Sigmoid colon (tissue), 7 donors: ENCODE measurements at regions of chr13 and their contacts with region 1.

Region 1: DNA sequence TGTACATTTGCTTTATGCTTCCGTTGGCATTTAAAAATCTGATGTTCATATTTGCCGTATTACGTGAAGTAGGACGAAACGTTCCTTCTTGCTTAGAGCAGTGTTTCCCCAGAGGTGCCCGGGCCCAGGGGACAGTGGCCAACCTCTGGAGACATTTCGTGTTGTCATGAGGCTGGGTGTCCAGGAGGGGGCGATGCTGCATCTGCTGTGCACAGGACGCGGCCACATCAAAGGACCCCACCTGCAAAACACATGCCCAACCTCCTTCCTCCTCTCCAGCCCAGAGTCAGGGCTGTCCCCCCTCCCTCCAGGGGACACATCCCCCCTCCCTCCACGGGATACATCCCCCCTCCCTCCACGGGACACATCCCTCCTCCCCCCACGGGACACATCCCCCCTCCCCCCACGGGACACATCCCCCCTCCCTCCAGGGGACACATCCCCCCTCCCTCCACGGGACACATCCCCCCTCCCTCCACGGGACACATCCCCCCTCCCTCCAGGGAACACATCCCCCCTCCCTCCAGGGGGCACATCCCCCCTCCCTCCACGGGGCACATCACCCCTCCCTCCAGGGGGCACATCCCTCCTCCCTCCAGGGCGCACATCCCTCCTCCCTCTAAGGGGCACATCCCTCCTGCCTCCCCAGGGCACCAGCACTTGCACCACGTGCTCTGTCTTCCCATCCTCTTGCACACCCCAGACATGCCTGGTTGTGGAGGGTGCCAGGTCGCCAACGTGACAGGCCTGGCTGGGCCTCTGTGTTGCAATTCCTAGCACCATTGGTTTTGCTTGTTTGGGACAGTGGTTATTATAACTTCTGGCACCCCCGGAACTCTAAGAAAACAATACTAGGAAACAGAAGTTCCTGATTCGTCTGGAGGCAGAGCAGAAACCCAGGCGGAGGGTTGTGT is 46.7 kb downstream of the GAS6 start:
- DNase-seq: peak; percentile 95
- H3K4me3 ChIP-seq: no peak overlapping the region
- H3K27ac ChIP-seq: peak overlapping the region; percentile 53 to 89 (median 68)
- H3K4me1 ChIP-seq: peaks cover 0 to 60% (median 49%) of the 10 kb centered on the region in 4 donors
- H3K27me3 ChIP-seq: no peaks in the 10 kb centered on the region
- CTCF ChIP-seq: peak; percentile 77 to 90 (median 86)
- EP300 ChIP-seq: no peak
- POLR2A ChIP-seq: no peak

Region 2: GRCh38 chr13:113837554-113838355 is 20.6 kb after region 1 on chr13:
- intact Hi-C with region 1: loop called (anchors 2 kb)
- DNase-seq: peak; percentile 98
- H3K4me3 ChIP-seq: peak overlapping the region in 3 of 4 donors; percentile 22 to 45 (median 24)
- H3K27ac ChIP-seq: peak overlapping the region; percentile 85 to 94 (median 90)
- H3K4me1 ChIP-seq: peaks cover 0 to 49% (median 44%) of the 10 kb centered on the region in 4 donors
- H3K27me3 ChIP-seq: no peaks in the 10 kb centered on the region
- CTCF ChIP-seq: no peak
- EP300 ChIP-seq: peak in 1 of 4 donors; percentile 27
- POLR2A ChIP-seq: no peak

Region 3: GRCh38 chr13:113863436-113864272 is 46.5 kb after region 1 on chr13 and contains the start of gene GAS6:
- intact Hi-C with region 1: loop called (anchors 1 kb)
- DNase-seq: no peak
- H3K4me3 ChIP-seq: peak within 1 kb of the TSS; percentile 42 to 81 (median 74)
- H3K27ac ChIP-seq: peak within 1 kb of the TSS; percentile 75 to 93 (median 82)
- H3K4me1 ChIP-seq: peaks cover 0 to 39% (median 21%) of the 10 kb centered on the region in 4 donors
- H3K27me3 ChIP-seq: no peaks in the 10 kb centered on the region
- CTCF ChIP-seq: no peak
- EP300 ChIP-seq: no peak
- POLR2A ChIP-seq: no peak
- total RNA-seq, gene GAS6: 34.4 to 105 (median 70.4) TPM

Region 4: DNA sequence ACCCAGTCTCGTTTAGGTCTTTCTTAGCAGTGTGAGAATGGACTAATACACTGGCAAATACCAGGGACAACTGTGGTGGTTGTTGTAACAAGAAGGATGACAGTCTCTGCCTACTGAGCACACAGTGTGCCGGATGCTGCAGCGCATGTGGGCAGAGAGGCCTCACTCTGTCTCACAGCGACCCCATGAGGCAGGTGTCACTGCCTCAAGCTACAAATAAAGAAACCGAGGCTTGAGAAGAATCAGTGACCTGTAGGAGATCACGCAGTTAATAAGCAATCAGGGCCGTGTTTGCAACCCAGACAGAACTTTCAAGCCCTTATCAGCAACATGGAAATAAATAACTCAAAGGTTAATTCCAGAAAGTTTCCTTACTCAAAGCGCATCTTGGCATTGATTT is 87.2 kb after region 1 on chr13:
- intact Hi-C with region 1: loop called (anchors 2 kb)
- DNase-seq: no peak
- H3K4me3 ChIP-seq: no peak overlapping the region
- H3K27ac ChIP-seq: peak overlapping the region in 2 of 4 donors; percentile 68 to 86
- H3K4me1 ChIP-seq: peaks cover 0 to 28% (median 14%) of the 10 kb centered on the region in 4 donors
- H3K27me3 ChIP-seq: no peaks in the 10 kb centered on the region
- CTCF ChIP-seq: peak in 3 of 4 experiments; percentile 27 to 46 (median 44)
- EP300 ChIP-seq: no peak
- POLR2A ChIP-seq: no peak

Region 5: DNA sequence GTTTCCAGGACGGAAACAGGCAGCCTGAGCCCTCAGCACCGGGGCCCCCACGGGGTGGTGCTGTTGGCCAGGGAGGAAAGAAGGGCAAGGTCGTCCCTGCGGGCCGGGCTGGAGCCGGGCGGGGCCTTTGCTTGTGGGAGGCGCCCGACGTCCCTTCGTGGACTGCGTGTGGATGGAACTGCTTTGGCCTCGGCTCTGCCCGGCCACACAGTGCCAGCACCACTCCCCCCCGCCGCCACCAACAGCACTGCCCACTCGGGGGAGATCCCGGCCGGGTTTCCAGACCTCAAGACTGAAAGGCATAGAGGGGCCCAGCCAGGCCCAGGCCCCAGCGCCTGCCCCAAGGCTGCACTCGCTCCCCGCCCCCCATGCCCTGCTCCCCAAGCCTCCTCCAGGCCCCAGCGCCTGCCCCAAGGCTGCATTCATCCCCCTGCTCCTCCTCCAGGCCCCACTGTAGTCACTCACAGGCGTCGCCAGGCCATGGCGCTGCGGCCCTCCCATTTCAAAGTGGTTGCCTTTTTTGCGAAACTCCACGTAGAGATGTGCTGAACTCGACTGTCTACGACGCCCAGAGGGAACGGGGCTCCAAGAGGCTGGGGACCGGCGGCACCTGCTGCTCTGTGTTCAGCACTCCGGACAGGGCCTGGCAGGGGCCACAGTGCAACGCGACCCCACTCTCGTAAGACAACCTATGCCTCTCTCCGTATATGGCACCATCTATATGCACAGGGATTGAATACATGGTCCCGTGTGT is 134.2 kb after region 1 on chr13:
- intact Hi-C with region 1: loop called (anchors 1 kb)
- DNase-seq: peak; percentile 93
- H3K4me3 ChIP-seq: peak overlapping the region in 3 of 4 donors; percentile 25 to 36 (median 33)
- H3K27ac ChIP-seq: peak overlapping the region in 2 of 4 donors; percentile 25 to 42
- H3K4me1 ChIP-seq: peaks cover 0 to 22% (median 15%) of the 10 kb centered on the region in 4 donors
- H3K27me3 ChIP-seq: no peaks in the 10 kb centered on the region
- CTCF ChIP-seq: peak; percentile 71 to 88 (median 82)
- EP300 ChIP-seq: no peak
- POLR2A ChIP-seq: no peak

Region 6: GRCh38 chr13:114065141-114065925 is 248.1 kb after region 1 on chr13:
- intact Hi-C with region 1: loop called (anchors 5 kb)
- DNase-seq: peak; percentile 96
- H3K4me3 ChIP-seq: peak overlapping the region in 3 of 4 donors; percentile 37 to 45 (median 43)
- H3K27ac ChIP-seq: peak overlapping the region; percentile 90 to 98 (median 96)
- H3K4me1 ChIP-seq: peaks cover 0 to 71% (median 68%) of the 10 kb centered on the region in 4 donors
- H3K27me3 ChIP-seq: no peaks in the 10 kb centered on the region
- CTCF ChIP-seq: no peak
- EP300 ChIP-seq: peak in 2 of 4 donors; percentile 69 to 88
- POLR2A ChIP-seq: no peak

Region 7: GRCh38 chr13:114212158-114212495 is 394.9 kb after region 1 on chr13:
- intact Hi-C with region 1: no loop called
- DNase-seq: no peak
- H3K4me3 ChIP-seq: no peak overlapping the region
- H3K27ac ChIP-seq: no peak overlapping the region
- H3K4me1 ChIP-seq: no peaks in the 10 kb centered on the region
- H3K27me3 ChIP-seq: peaks cover 0 to 9% (median 0%) of the 10 kb centered on the region in 3 donors
- CTCF ChIP-seq: no peak
- EP300 ChIP-seq: no peak
- POLR2A ChIP-seq: no peak

Region 8: DNA sequence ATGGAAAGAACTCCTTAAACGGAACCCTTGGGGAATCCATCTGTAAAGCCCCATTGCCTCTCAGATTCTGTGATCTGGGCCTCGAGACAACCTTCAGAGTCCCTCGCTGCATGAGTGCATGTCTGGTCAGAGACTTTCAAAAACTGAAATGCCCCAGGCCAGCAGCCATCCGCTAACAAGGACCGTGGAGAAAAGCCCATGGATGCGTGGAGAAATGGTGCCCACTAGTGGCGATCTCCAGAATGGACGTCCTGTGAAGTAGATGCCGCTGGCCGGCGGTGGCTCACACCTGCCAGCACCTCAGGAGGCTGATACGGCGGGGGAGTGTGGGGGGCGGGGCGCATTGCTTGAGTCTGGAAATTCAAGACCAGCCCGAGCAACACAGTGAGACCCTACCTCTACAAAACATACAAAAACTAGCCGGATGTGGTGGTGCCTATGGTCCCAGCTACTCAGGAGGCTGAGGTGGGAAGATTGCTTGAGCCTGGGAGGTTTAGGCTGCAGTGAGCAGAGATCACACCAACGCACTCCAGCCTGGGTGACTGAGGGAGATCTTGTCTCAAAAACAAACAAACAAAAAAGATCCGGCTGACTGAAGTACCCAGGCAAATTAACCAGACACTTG is 409.6 kb after region 1 on chr13:
- intact Hi-C with region 1: loop called (anchors 2 kb)
- DNase-seq: peak; percentile 93
- H3K4me3 ChIP-seq: no peak overlapping the region
- H3K27ac ChIP-seq: peak overlapping the region in 2 of 4 donors; percentile 28 to 41
- H3K4me1 ChIP-seq: peaks cover 0 to 16% (median 13%) of the 10 kb centered on the region in 4 donors
- H3K27me3 ChIP-seq: peaks cover 0 to 31% (median 19%) of the 10 kb centered on the region in 3 donors
- CTCF ChIP-seq: peak; percentile 86 to 99 (median 98)
- EP300 ChIP-seq: no peak
- POLR2A ChIP-seq: no peak